A549 (cell line): ENCODE measurements at regions of chr9 and their contacts with region 1.

Region 1: DNA sequence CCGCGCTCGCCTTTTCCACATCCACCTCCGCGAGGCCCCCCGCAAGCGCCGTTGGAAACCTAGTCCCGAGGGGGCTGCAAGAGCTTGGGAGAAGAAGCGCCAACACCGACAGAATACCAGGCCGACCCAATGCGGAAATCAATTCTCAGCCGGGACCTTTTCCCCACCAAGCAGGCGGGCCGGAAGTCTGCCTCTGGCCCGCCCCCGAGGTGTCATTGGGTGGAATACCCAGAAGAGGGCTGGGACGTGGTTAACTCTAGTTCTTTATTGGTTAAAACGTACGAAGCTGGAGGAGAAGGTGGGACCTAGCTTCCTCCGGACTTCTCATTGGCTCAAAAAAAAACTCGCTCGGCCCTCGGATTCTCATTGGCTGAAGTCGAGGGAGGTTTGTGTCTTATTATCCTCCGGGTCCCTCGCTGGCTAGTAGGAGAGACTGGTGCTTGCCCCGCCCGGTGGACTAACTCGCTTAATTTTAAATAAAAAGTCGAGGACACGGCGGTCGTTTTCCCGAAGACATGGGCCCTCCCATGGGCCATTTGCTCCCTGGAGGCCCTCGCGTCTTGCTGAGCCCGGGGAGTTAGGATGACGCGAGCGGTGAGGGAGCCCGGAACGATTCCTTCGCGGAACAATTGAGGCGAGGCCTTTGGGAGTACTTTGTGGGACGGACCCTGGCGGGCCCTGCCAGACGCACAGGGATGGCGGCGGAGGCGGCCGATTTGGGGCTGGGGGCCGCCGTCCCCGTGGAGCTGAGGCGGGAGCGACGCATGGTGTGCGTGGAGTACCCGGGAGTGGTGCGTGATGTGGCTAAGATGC is at the start of gene GTF3C5:
- DNase-seq: peak; percentile 99 to 100
- ATAC-seq: peak; percentile 98 to 99
- H3K4me3 ChIP-seq: peak within 1 kb of the TSS; percentile 67
- H3K27ac ChIP-seq: peak within 1 kb of the TSS; percentile 83 to 96
- H3K4me1 ChIP-seq: peaks cover 17% of the 10 kb centered on the region
- CTCF ChIP-seq: no peak
- EP300 ChIP-seq: no peak
- POLR2A ChIP-seq: peak; percentile 80
- RAD21 ChIP-seq: no peak
- polyA plus RNA-seq, gene GTF3C5: 57.2 and 57.4 TPM in 2 replicates

Region 2: GRCh38 chr9:133004091-133004998 is 26.2 kb before region 1 on chr9:
- CTCF ChIA-PET with region 1: interaction called, 4 read pairs
- POLR2A ChIA-PET with region 1: interaction called, 10 read pairs
- DNase-seq: no peak
- ATAC-seq: no peak
- H3K4me3 ChIP-seq: no peak overlapping the region
- H3K27ac ChIP-seq: no peak overlapping the region
- H3K4me1 ChIP-seq: no peaks in the 10 kb centered on the region
- CTCF ChIP-seq: no peak
- EP300 ChIP-seq: no peak
- POLR2A ChIP-seq: no peak
- RAD21 ChIP-seq: no peak

Region 3: DNA sequence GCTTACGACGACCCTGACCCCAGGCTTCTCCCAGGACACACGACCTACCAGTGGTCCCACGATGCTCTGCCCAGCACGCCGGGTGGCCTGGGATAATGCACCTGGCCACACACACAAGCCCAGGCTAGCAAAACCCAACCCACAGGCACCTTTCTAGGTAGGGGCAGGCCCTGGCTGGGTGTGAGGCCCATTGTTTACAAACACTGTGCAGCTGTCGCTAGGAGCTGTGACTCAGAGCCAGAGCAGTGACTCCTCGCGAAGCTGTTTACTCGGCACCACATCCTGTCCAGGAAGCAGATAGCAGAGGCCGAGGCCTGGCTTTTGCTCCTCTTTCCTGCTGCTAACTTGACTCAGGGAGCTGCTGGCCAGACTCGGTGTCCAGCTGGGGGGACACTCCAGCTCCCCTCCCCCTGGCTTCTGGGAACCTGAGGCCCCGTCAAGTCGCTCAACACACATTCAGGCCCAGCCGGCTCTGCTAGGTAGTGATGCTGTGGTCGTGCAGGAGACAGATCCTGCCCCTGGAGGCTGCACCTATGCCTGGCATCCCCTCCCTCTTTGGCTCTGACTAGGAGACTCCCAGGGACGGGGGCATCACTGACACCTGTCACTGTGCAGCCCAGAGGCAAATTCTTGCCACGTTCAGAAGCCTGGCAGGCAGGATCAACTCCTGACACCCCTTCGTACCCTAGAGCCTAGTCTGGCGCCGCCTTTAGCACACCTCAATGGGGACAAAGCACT is 103.3 kb after region 1 on chr9:
- CTCF ChIA-PET with region 1: interaction called, 3 read pairs
- POLR2A ChIA-PET with region 1: interaction called, 10 read pairs
- DNase-seq: peak; percentile 95 to 99
- ATAC-seq: peak; percentile 91 to 92
- H3K4me3 ChIP-seq: no peak overlapping the region
- H3K27ac ChIP-seq: peak overlapping the region; percentile 64 to 85; a peak in 5 of 6 replicates
- H3K4me1 ChIP-seq: peaks cover 67% of the 10 kb centered on the region
- CTCF ChIP-seq: no peak
- EP300 ChIP-seq: no peak
- POLR2A ChIP-seq: no peak
- RAD21 ChIP-seq: no peak